Activated CD8-positive, alpha-beta T cell treated with anti-CD3 and anti-CD28 coated beads for 36 hours (primary cell): ENCODE measurements at regions of chr9 and their contacts with region 1.

Region 1: DNA sequence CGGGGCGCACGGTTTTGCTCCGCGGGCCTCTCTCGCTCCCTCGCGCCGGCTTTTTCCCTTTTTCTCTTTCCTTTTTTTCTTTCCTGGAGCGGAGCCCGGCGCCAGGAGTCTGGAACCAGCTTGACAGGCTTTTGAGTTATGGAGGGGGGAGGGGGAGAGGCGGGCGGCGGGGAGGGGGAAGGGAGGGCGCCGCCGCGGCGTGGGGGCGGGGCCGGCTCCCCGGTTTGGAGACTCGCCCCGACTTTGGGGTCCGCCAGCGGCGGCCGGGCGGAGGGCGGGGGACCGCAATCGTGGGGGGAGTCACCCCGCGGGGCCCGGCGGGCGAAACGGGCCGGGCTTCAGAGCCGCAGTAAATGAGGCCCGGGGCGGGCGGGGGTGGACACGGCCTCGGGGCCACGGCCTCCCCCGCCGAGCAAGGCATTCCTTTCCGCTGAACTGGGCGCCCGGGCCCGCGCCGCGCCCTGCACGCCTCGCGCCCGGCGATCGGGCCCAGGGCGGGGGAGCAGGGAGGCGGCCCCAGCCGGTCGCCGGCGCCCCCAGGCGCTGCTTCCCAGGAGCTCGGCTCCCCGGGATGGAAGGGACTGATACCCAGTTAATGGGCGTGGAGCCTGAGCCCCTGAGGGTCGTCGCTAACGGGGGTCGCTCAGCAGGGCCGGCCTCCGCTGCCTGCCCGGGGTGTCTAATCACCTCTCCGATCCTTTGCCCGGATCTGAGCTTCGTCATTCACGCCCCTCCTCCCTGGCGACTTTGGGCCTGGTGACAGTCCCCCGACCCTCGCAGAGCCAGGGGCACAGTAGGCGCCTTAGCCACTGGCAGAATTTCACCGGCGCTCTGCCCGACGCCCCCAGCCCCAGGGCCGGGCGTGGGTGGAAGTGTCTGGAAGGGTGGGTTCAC is 138.1 kb downstream of the C9orf50 start:
- DNase-seq: peak; percentile 53
- ATAC-seq: peak; percentile 37
- H3K4me3 Mint-ChIP-seq: peak overlapping the region; percentile 63
- H3K27ac Mint-ChIP-seq: peak overlapping the region; percentile 69
- H3K4me1 Mint-ChIP-seq: peaks cover 38% of the 10 kb centered on the region
- H3K27me3 Mint-ChIP-seq: peaks cover 7% of the 10 kb centered on the region
- CTCF ChIP-seq: no peak

Region 2: GRCh38 chr9:129377931-129378695 is 104.7 kb before region 1 on chr9:
- CTCF ChIA-PET with region 1: no interaction called
- POLR2A ChIA-PET with region 1: no interaction called
- intact Hi-C with region 1: no loop called
- DNase-seq: no peak
- ATAC-seq: no peak
- H3K4me3 Mint-ChIP-seq: no peak overlapping the region
- H3K27ac Mint-ChIP-seq: no peak overlapping the region
- H3K4me1 Mint-ChIP-seq: no peaks in the 10 kb centered on the region
- H3K27me3 Mint-ChIP-seq: no peaks in the 10 kb centered on the region
- CTCF ChIP-seq: no peak

Region 3: DNA sequence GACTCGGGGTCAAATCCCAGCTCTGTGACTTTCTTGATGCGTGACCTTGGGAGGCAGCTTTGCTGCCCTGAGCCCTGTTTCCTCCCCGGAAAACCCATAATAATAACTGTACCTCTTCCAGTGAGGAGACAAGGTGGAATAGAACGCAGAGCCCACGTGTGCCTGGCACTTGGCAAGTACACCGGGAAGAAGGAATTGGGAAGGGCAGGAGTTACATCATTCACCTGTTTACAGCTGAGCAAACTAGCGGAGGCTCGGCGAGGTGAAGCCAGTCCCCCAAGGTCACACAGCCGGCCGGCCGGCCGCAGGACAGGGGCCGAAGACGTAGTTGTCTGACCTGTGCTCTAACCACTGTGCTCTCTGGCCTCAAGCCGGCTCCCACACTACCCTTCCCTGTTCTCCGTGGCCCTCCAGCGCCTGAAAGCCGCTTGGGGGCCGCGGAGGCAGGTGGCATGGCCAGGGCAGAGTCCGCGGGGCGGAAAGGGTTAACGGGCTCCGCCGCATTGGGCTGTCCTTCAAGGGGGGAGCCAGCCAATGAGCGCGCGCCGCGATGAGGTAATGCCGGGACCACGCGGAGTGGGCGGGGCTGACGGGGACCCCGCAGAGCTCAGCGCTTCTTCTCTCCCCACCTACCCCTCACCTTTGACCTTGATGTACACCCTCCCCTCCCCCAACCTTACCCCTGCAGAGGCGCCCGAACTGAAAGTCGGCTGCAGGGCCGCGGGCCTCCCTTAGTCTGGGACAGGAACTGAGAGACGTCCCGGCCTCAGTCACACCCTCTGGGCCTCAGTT is 13.0 kb after region 1 on chr9:
- CTCF ChIA-PET with region 1: no interaction called
- POLR2A ChIA-PET with region 1: interaction called, 16 read pairs
- intact Hi-C with region 1: no loop called
- DNase-seq: peak; percentile 94
- ATAC-seq: peak; percentile 90
- H3K4me3 Mint-ChIP-seq: peak overlapping the region; percentile 51
- H3K27ac Mint-ChIP-seq: peak overlapping the region; percentile 71
- H3K4me1 Mint-ChIP-seq: peaks cover 20% of the 10 kb centered on the region
- H3K27me3 Mint-ChIP-seq: no peaks in the 10 kb centered on the region
- CTCF ChIP-seq: no peak

Region 4: DNA sequence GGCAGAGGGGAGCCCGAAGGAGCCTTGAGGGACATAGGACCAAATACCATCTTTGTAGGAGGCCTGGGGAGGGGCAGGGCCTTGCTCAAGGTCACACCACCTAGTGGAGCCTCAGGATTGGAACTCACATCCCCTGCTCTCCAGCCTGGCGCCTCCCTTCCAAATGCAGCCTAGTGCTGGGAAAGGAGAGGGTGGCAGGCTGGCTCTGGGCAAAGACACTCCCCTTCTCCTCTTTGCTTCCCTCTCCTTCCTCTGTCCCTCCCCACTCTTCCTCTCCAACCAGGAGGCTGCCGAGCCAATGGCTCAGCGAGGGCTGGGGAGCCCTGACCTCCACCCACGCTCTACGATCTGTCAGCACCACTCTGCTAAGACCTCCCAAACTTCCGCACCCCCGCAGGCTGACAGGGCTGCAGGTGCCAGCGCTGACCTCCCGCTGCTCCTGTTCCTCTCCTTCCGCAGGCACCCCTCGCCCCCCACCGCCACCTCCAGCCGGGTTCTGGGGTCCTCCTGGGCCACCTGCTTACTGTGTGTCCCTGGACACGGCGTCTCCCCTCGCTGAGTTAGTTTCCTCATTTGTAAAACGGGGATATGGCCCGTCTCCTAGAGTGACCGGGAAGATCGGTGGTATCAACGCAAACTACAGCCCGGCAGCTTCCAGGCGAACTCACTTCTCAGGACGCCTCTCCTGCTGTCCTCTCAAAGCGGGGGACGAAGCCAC is 85.2 kb after region 1 on chr9:
- CTCF ChIA-PET with region 1: no interaction called
- POLR2A ChIA-PET with region 1: no interaction called
- intact Hi-C with region 1: no loop called
- DNase-seq: no peak
- ATAC-seq: no peak
- H3K4me3 Mint-ChIP-seq: peak overlapping the region; percentile 43
- H3K27ac Mint-ChIP-seq: no peak overlapping the region
- H3K4me1 Mint-ChIP-seq: peaks cover 26% of the 10 kb centered on the region
- H3K27me3 Mint-ChIP-seq: peaks cover 22% of the 10 kb centered on the region
- CTCF ChIP-seq: no peak